Esophagus squamous epithelium (tissue), 5 donors: ENCODE measurements at regions of chr20 and their contacts with region 1.

Region 1: GRCh38 chr20:58388882-58389323 is at the start of gene VAPB:
- DNase-seq: peak; percentile 68
- H3K4me3 ChIP-seq: peak within 1 kb of the TSS; percentile 64 to 93 (median 78)
- H3K27ac ChIP-seq: peak within 1 kb of the TSS; percentile 92 to 98 (median 92)
- H3K4me1 ChIP-seq: peaks cover 14 to 43% (median 20%) of the 10 kb centered on the region in 3 donors
- H3K27me3 ChIP-seq: no peaks in the 10 kb centered on the region
- CTCF ChIP-seq: no peak
- POLR2A ChIP-seq: peak in 3 of 4 donors; percentile 53 to 85 (median 84)
- total RNA-seq, gene VAPB: 11.5 to 21.2 (median 16.6) TPM

Region 2: GRCh38 chr20:58150772-58151171 is 238.1 kb before region 1 on chr20:
- intact Hi-C with region 1: no loop called
- DNase-seq: no peak
- H3K4me3 ChIP-seq: no peak overlapping the region
- H3K27ac ChIP-seq: no peak overlapping the region
- H3K4me1 ChIP-seq: peaks cover 0 to 4% (median 0%) of the 10 kb centered on the region in 3 donors
- H3K27me3 ChIP-seq: peaks cover 0 to 88% (median 1%) of the 10 kb centered on the region in 4 donors
- CTCF ChIP-seq: no peak
- POLR2A ChIP-seq: no peak

Region 3: GRCh38 chr20:58309575-58310290 is 79.2 kb before region 1 on chr20 and contains the start of gene RAB22A:
- intact Hi-C with region 1: loop called (anchors 10 kb)
- DNase-seq: no peak
- H3K4me3 ChIP-seq: peak within 1 kb of the TSS; percentile 71 to 100 (median 90)
- H3K27ac ChIP-seq: peak within 1 kb of the TSS; percentile 89 to 96 (median 90)
- H3K4me1 ChIP-seq: peaks cover 6 to 70% (median 37%) of the 10 kb centered on the region in 3 donors
- H3K27me3 ChIP-seq: no peaks in the 10 kb centered on the region
- CTCF ChIP-seq: peak in 1 of 6 experiments; percentile 3
- POLR2A ChIP-seq: peak in 3 of 4 donors; percentile 60 to 89 (median 81)
- total RNA-seq, gene RAB22A: 18.4 to 33.2 (median 21.4) TPM